Panc1 (cell line): ENCODE measurements at regions of chr17 and their contacts with region 1.

Region 1: DNA sequence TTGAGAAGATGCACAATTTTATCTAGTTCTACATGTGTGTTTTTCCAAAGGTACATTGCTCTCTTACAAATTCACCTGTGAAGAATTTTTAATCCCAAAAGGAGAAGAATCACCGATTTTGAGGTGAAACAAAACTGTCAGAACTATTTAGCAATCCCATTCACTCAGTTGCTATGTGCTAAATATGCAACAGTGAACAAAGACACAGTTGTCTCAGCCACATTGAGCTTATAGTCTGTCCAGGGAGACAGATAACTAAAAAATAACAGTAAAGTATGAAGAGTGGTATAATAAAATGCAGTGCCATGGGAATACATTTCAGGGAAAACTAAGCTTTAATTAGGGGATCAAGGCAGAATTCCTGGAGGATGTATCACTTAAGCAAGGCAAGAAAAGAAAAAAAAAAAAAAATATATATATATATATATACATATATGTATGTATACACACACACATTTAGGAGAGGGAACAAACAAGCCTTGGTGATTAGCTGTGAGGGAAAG is 110.4 kb downstream of the SPAG9 start:
- DNase-seq: no peak
- ATAC-seq: no peak
- H3K4me3 ChIP-seq: no peak overlapping the region
- H3K27ac ChIP-seq: no peak overlapping the region
- H3K4me1 ChIP-seq: no peaks in the 10 kb centered on the region
- H3K27me3 ChIP-seq: no peaks in the 10 kb centered on the region
- CTCF ChIP-seq: no peak

Region 2: GRCh38 chr17:51071556-51071955 is 61.3 kb after region 1 on chr17:
- CTCF ChIA-PET with region 1: no interaction called
- POLR2A ChIA-PET with region 1: no interaction called
- in situ Hi-C with region 1: loop called (anchors 5 kb)
- intact Hi-C with region 1: no loop called
- DNase-seq: no peak
- ATAC-seq: no peak
- H3K4me3 ChIP-seq: no peak overlapping the region
- H3K27ac ChIP-seq: no peak overlapping the region
- H3K4me1 ChIP-seq: no peaks in the 10 kb centered on the region
- H3K27me3 ChIP-seq: no peaks in the 10 kb centered on the region
- CTCF ChIP-seq: no peak

Region 3: DNA sequence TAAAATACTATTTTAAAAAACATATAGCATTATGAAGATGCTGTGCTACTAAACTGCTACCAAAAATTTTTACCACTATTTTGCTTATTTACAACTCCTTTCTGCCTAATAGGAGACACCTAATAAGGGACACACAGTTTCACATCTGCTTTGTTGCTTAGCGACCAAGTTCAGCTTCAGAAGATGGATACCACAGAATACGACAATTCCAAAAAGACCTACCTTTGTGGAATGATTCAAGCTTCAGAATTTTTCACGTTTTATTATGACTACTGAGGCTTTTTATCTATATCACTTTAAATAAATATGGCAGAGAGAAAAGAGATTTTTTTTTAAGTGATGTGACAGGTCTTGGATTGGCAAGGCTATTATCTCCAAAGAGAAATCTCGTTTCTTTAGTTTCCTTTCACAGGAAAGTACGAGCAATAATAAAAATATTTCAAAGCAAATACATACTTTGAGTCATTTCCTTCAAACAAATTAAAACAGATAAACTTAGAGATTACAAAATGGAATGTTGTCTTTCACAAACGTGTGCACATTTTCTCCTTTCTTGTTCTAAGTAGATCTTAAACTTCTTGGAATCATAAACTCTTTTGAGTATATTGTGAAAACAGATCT is 75.1 kb after region 1 on chr17:
- CTCF ChIA-PET with region 1: no interaction called
- POLR2A ChIA-PET with region 1: no interaction called
- in situ Hi-C with region 1: no loop called
- intact Hi-C with region 1: no loop called
- DNase-seq: peak; percentile 12
- ATAC-seq: peak; percentile 13; the same call in 1 of the 2 replicates
- H3K4me3 ChIP-seq: no peak overlapping the region; a peak in 1 of 4 replicates
- H3K27ac ChIP-seq: 0 out of 2 replicates have a peak overlapping the region, but pooled peaks have one; percentile 3
- H3K4me1 ChIP-seq: peaks cover 8% of the 10 kb centered on the region
- H3K27me3 ChIP-seq: no peaks in the 10 kb centered on the region
- CTCF ChIP-seq: no peak